ENCODE measurements at regions of chr21 and their contacts with region 1.

Region 1: DNA sequence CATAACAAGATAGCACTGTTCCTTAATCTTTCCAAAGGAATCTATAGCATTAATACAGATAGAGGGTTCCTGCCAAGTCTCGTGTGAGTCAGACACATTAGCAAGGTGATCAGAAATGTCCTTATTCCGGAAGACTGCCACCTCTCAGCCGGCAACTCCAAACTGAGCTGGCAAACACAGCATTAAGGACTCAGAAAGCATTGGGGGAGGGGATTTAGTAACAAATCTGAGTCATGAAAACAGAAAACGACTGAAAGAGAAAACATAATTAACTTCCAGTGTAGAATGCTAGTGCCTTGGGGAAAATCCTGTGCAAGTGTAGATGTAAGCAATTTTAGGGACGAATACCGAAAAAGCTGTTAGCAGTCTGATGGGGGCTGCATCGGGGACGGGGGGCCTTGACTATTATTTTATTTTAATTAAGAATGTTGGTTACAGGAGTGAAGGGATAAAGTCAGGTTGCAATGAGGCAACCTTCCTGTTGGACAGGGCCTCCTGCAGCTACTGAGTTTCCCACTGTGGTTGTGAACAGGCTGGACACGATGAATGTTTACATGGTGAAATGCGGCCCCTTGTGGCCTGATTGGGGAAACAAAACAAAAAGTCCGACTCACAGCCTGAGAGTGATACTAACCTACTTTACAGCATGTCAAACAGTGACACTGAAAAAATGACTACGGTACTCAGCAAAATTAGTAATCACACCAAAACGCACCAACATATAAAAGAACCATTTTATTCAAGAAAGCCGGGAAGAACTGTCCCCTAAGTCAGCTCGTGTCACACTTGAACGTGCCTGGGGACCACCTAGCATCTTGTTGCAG is 20.7 kb downstream of the MIS18A start:
- H3K4me3 ChIP-seq: no peak overlapping the region
- H3K27ac ChIP-seq: no peak overlapping the region
- H3K4me1 ChIP-seq: peaks cover 9% of the 10 kb centered on the region
- CTCF ChIP-seq: peak; percentile 91

Region 2: GRCh38 chr21:31781737-31782136 is 476.4 kb before region 1 on chr21:
- CTCF ChIA-PET with region 1: interaction called, 55 read pairs
- POLR2A ChIA-PET with region 1: no interaction called
- H3K4me3 ChIP-seq: no peak overlapping the region
- H3K27ac ChIP-seq: no peak overlapping the region
- H3K4me1 ChIP-seq: peaks cover 9% of the 10 kb centered on the region
- CTCF ChIP-seq: no peak

Region 3: DNA sequence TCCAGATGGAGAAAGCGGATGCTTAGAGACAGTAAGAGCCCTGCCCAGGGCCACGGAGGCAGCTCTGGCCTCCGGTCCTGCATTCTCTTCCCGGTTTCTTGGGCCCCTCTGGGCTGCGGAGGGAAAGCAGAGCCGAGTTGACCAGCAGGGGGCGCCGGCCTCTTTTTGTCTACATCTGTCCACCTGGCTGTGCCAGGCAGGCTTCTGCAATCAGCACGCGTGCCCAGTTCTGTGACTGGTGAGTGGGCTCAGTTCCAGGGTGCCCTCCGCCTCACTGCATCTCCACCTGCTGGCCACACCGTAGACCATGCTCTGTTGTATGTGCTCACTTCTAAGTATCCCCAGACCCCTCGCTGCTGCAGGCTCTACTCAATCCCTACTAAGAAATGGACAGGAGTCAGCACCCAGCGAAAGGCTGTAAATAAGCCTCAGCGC is 392.1 kb before region 1 on chr21:
- CTCF ChIA-PET with region 1: interaction called, 71 read pairs
- POLR2A ChIA-PET with region 1: no interaction called
- H3K4me3 ChIP-seq: no peak overlapping the region
- H3K27ac ChIP-seq: no peak overlapping the region
- H3K4me1 ChIP-seq: no peaks in the 10 kb centered on the region
- CTCF ChIP-seq: peak; percentile 87

Region 4: GRCh38 chr21:31873696-31874599 is 384.2 kb before region 1 on chr21:
- CTCF ChIA-PET with region 1: interaction called, 71 read pairs
- POLR2A ChIA-PET with region 1: no interaction called
- H3K4me3 ChIP-seq: peak overlapping the region; percentile 75
- H3K27ac ChIP-seq: peak overlapping the region; percentile 81; the same call in 1 of the 2 replicates
- H3K4me1 ChIP-seq: peaks cover 5% of the 10 kb centered on the region; the same call in 1 of the 2 replicates
- CTCF ChIP-seq: peak; percentile 94

Region 5: DNA sequence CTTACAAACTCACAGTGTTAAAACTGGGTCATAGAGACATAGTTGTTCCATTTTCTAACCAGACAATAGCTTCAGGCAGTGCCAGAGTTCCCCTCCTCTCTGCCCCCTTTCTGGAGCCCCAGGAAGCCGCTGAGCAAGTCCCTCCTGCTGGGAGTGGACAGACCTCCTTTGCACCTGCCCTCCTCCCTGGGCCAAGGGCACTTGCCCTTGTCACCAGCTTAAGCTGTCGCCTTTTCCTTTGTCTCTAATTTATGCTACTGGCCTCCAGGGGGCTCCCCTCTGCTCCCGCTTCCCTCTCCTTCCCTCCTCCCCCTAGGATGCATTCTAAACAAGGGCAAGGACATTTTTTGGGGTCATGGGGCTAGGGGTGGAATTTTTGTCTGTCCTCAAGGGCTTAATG is 161.8 kb before region 1 on chr21:
- CTCF ChIA-PET with region 1: interaction called, 38 read pairs
- POLR2A ChIA-PET with region 1: no interaction called
- H3K4me3 ChIP-seq: no peak overlapping the region
- H3K27ac ChIP-seq: no peak overlapping the region
- H3K4me1 ChIP-seq: no peaks in the 10 kb centered on the region
- CTCF ChIP-seq: no peak; the same call in 1 of the 2 replicates

Region 6: GRCh38 chr21:32270748-32271147 is 12.6 kb after region 1 on chr21:
- CTCF ChIA-PET with region 1: interaction called, 11 read pairs
- POLR2A ChIA-PET with region 1: interaction called, 3 read pairs
- H3K4me3 ChIP-seq: no peak overlapping the region
- H3K27ac ChIP-seq: no peak overlapping the region
- H3K4me1 ChIP-seq: no peaks in the 10 kb centered on the region
- CTCF ChIP-seq: no peak

Region 7: GRCh38 chr21:32306021-32306780 is 48.0 kb after region 1 on chr21:
- CTCF ChIA-PET with region 1: no interaction called
- POLR2A ChIA-PET with region 1: no interaction called
- H3K4me3 ChIP-seq: no peak overlapping the region
- H3K27ac ChIP-seq: no peak overlapping the region
- H3K4me1 ChIP-seq: no peaks in the 10 kb centered on the region
- CTCF ChIP-seq: no peak

Measured in HEK293 (cell line).